ENCODE measurements at regions of chr15 and their contacts with region 1.

Region 1: GRCh38 chr15:77543159-77543882 is 89.4 kb downstream of the LINGO1 start:
- DNase-seq: peak; percentile 50 to 65 (median 60)
- H3K4me3 ChIP-seq: peak overlapping the region; percentile 42 to 76 (median 63)
- H3K4me3 Mint-ChIP-seq: peak overlapping the region; percentile 75 to 86
- H3K27ac ChIP-seq: no peak overlapping the region
- H3K27ac Mint-ChIP-seq: peak overlapping the region in 1 of 7 donors; percentile 40
- H3K4me1 ChIP-seq: peaks cover 12 to 23% of the 10 kb centered on the region in 2 donors
- H3K4me1 Mint-ChIP-seq: peaks cover 29% of the 10 kb centered on the region
- H3K27me3 ChIP-seq: no peaks in the 10 kb centered on the region
- H3K27me3 Mint-ChIP-seq: peaks cover 7 to 13% (median 9%) of the 10 kb centered on the region in 3 donors
- CTCF ChIP-seq: peak; percentile 90

Region 2: GRCh38 chr15:77118882-77119321 is 424.4 kb before region 1 on chr15:
- intact Hi-C with region 1: loop called in 1 of 2 experiments (anchors 2 kb)
- DNase-seq: peak; percentile 18 to 45 (median 43)
- H3K4me3 ChIP-seq: no peak overlapping the region
- H3K4me3 Mint-ChIP-seq: no peak overlapping the region
- H3K27ac ChIP-seq: no peak overlapping the region
- H3K27ac Mint-ChIP-seq: no peak overlapping the region
- H3K4me1 ChIP-seq: no peaks in the 10 kb centered on the region
- H3K4me1 Mint-ChIP-seq: peaks cover 4% of the 10 kb centered on the region
- H3K27me3 ChIP-seq: no peaks in the 10 kb centered on the region
- H3K27me3 Mint-ChIP-seq: peaks cover 0 to 4% (median 2%) of the 10 kb centered on the region in 3 donors
- CTCF ChIP-seq: peak; percentile 68

Measured in CD14-positive monocyte (primary cell).